Activated B cell treated with CpG ODN at 0.5 μM for 24 hours (primary cell): ENCODE measurements at regions of chr13 and their contacts with region 1.

Region 1: GRCh38 chr13:29595380-29596063 is at the start of gene SLC7A1:
- DNase-seq: peak; percentile 82
- ATAC-seq: peak; percentile 87
- H3K4me3 Mint-ChIP-seq: peak within 1 kb of the TSS; percentile 91
- H3K27ac Mint-ChIP-seq: peak within 1 kb of the TSS; percentile 88
- H3K4me1 Mint-ChIP-seq: peaks cover 33% of the 10 kb centered on the region
- H3K27me3 Mint-ChIP-seq: peaks cover 1% of the 10 kb centered on the region
- CTCF ChIP-seq: no peak
- total RNA-seq, gene SLC7A1: 83.5 and 85.0 TPM in 2 replicates

Region 2: DNA sequence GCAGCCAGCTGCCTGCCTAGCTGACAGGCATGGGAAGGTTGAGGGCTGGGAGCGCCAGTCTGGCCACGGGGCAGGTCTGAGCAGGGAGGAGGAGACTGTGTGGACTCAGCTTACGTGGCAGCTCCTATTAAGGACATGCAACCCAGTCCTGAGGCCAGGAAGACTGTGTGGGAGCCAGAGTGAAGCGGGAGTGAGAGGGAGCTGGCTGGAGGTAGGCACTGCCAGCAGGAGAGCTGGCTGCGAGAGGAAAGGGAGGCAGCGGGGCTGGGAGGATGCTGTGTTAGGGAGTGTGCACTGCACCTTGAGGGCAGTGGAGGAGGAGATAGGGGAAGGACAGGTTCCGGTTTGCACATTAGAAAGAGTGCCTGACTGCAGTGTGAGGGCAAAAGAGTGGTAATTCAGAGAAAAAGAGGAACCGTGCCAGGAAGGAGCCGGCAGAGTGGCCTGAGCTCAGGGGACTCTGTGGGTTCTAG is 99.2 kb before region 1 on chr13:
- CTCF ChIA-PET with region 1: no interaction called
- POLR2A ChIA-PET with region 1: no interaction called
- intact Hi-C with region 1: loop called (anchors 2 kb)
- DNase-seq: peak; percentile 38
- ATAC-seq: peak; percentile 70
- H3K4me3 Mint-ChIP-seq: peak overlapping the region; percentile 71
- H3K27ac Mint-ChIP-seq: peak overlapping the region; percentile 68
- H3K4me1 Mint-ChIP-seq: peaks cover 36% of the 10 kb centered on the region
- H3K27me3 Mint-ChIP-seq: no peaks in the 10 kb centered on the region
- CTCF ChIP-seq: no peak

Region 3: DNA sequence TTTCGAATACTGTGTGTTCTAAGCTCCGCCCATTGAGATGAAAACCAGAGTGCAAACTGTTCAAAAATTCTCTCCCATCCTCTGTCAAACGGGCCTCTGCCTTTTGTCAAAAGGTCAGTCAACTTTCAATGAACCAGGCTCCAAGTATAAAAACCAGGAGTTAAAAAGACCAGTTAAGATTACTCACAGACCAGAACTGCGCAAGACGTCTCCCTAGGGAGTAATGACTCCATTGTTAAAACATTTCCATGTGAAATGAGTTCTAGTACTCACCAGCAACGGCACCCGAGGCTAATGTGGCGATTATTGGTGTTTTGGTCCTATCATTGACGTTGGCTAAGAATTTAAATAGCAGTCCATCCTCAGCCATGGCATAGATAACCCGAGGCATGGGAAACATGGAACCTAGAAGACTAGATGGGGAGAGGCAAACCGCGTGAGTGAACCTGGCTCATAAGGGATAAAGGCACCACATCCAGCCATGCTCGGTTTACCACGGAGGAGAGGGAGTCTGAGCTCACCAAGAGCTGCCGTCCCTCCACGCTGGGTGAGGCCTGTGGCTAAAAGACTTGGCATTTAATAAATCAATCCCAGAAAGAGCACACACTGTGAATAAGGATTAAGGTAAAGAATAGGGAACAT is 73.4 kb before region 1 on chr13:
- CTCF ChIA-PET with region 1: no interaction called
- POLR2A ChIA-PET with region 1: no interaction called
- intact Hi-C with region 1: no loop called
- DNase-seq: no peak
- ATAC-seq: no peak
- H3K4me3 Mint-ChIP-seq: no peak overlapping the region
- H3K27ac Mint-ChIP-seq: no peak overlapping the region
- H3K4me1 Mint-ChIP-seq: no peaks in the 10 kb centered on the region
- H3K27me3 Mint-ChIP-seq: no peaks in the 10 kb centered on the region
- CTCF ChIP-seq: no peak

Region 4: GRCh38 chr13:29543230-29544215 is 52.0 kb before region 1 on chr13:
- CTCF ChIA-PET with region 1: interaction called, 3 read pairs
- POLR2A ChIA-PET with region 1: no interaction called
- intact Hi-C with region 1: loop called (anchors 2 kb)
- DNase-seq: peak; percentile 19
- ATAC-seq: peak; percentile 97
- H3K4me3 Mint-ChIP-seq: no peak overlapping the region
- H3K27ac Mint-ChIP-seq: no peak overlapping the region
- H3K4me1 Mint-ChIP-seq: peaks cover 20% of the 10 kb centered on the region
- H3K27me3 Mint-ChIP-seq: no peaks in the 10 kb centered on the region
- CTCF ChIP-seq: no peak

Region 5: DNA sequence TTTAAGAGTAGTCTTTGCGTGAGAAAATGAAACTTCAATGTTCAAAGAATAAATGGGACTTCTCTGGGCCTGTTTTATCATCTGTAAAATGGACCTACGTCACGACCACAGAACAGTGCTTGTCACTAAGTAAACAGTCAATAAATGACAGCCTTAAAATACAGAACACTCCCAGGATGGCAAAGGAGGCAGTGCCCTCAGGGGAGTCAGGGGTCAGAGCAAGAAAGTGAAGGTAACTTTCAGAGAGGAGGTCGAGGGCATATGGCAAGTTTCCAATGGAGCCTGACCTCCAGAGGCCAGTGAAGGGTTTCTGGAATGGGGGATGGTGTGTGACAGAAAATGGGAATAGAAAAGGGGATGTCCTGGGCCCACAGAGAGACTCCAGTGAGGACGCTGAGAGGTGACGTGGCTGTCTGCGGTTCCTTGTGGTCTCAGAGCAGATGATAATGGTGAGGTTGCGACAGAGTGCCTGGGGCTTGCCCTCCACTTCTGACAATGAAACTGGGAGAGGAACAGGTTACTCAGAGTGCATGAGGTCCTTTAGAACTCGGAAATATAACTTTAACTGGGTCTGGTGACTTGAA is 163.1 kb after region 1 on chr13:
- CTCF ChIA-PET with region 1: no interaction called
- POLR2A ChIA-PET with region 1: no interaction called
- intact Hi-C with region 1: loop called (anchors 10 kb)
- DNase-seq: peak; percentile 22
- ATAC-seq: peak; percentile 84
- H3K4me3 Mint-ChIP-seq: peak overlapping the region; percentile 45
- H3K27ac Mint-ChIP-seq: peak overlapping the region; percentile 54
- H3K4me1 Mint-ChIP-seq: peaks cover 40% of the 10 kb centered on the region
- H3K27me3 Mint-ChIP-seq: no peaks in the 10 kb centered on the region
- CTCF ChIP-seq: no peak

Region 6: DNA sequence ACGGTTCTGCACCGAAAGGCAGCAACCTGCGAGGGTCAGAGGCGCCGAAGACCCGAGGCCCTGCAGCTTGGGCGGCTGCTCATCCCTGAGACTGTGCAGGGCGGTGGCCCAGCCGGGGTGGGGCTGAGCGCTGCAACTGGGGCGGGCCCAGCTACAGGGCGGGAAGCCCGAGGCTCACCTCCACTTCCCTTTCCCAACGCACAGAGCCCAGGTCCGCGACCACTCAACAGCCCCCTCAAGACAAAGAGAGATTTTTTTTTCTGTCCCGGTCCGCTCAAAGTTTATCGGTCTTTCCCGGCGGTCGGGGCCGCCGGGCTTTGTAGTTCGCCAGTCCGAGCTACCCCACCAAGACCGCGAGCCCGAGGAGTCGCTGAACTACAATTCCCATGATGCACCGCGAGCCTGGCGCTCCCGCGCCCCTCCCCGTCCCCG is 711.3 kb after region 1 on chr13:
- CTCF ChIA-PET with region 1: no interaction called
- POLR2A ChIA-PET with region 1: no interaction called
- intact Hi-C with region 1: loop called (anchors 5 kb)
- DNase-seq: peak; percentile 86
- ATAC-seq: peak; percentile 86
- H3K4me3 Mint-ChIP-seq: peak overlapping the region; percentile 90
- H3K27ac Mint-ChIP-seq: peak overlapping the region; percentile 85
- H3K4me1 Mint-ChIP-seq: peaks cover 72% of the 10 kb centered on the region
- H3K27me3 Mint-ChIP-seq: no peaks in the 10 kb centered on the region
- CTCF ChIP-seq: no peak

Region 7: DNA sequence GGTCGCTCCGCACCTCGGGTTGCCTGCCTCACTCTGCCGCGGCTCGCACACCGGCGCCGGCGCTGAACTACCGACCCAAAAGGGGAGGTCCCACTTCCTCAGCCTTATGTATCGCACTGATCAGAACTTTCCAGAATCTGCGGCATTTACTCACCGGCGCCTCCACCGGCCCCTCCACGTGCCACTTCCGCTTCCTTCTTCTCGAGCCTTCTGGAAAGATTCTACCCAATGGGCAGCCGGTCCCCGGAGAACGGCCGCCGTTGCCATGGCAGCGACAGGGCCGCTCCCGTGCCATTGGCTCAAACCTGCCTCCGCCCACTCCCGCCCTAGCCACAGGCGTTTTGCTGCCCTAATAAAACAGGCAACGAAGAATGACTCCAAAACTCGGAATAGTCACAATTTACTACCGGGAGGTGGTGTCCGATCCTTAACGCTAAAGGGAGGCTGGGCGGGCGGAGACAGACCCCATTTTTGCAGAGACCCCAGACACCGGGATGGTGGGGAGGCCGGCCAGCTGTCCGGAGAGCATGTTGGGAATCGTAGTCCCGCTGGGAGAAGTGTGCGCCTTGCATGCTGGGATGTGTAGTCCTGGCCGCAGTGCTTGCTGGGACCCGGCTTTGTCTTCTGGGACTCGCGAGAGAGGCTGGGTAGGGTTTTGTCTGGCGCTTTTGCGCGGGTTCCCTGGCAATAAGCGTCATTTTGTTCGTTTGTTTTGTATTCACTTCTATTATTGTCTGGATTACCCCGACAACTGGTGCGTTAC is 1566.5 kb after region 1 on chr13 and contains the start of gene HSPH1:
- CTCF ChIA-PET with region 1: no interaction called
- POLR2A ChIA-PET with region 1: no interaction called
- intact Hi-C with region 1: loop called (anchors 1 kb)
- DNase-seq: peak; percentile 99
- ATAC-seq: peak; percentile 85
- H3K4me3 Mint-ChIP-seq: peak within 1 kb of the TSS; percentile 97
- H3K27ac Mint-ChIP-seq: peak within 1 kb of the TSS; percentile 95
- H3K4me1 Mint-ChIP-seq: peaks cover 36% of the 10 kb centered on the region
- H3K27me3 Mint-ChIP-seq: no peaks in the 10 kb centered on the region
- CTCF ChIP-seq: no peak
- total RNA-seq, gene HSPH1: 107 and 112 TPM in 2 replicates